A673 (cell line): ENCODE measurements at regions of chr19 and their contacts with region 1.

Region 1: GRCh38 chr19:48333467-48334384 is 8.4 kb downstream of the EMP3 start:
- DNase-seq: peak; percentile 96
- H3K4me3 ChIP-seq: peak overlapping the region; percentile 56
- H3K27ac ChIP-seq: peak overlapping the region; percentile 91
- H3K4me1 ChIP-seq: peaks cover 15% of the 10 kb centered on the region
- H3K27me3 ChIP-seq: no peaks in the 10 kb centered on the region
- CTCF ChIP-seq: peak; percentile 91

Region 2: DNA sequence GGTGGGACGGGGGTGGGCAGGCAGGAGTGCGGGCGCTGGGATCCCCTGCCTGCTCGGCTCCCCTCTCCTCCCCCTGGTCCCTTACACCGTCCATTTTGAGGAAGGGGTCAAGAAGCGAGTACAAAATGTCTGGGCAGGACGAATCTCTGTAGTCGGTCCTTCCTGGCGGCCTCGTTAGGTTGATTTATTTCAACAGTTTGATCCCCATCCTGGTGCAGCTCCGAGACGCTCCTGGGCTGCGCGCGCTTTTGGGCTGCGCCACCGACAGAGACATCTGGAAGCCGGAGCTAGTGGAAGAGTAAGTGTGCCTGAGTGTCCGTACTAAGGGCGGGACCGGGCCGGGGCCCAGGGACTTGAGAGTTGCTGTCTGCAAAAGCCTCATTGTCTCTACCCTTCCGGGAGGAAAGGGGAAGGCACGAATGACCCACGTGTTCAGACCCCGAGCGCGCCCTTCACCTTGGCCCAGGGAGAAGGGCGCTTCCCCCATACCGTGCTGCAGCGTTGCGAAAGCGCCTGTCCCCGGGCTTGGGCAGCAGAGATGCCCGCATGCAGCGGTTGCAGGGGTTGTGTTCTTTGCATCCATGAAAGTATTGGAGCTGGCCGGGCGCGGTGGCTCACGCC is 62.1 kb before region 1 on chr19:
- CTCF ChIA-PET with region 1: interaction called, 4 read pairs
- POLR2A ChIA-PET with region 1: no interaction called
- intact Hi-C with region 1: loop called (anchors 5 kb)
- DNase-seq: peak; percentile 62
- H3K4me3 ChIP-seq: peak overlapping the region; percentile 60
- H3K27ac ChIP-seq: peak overlapping the region; percentile 72
- H3K4me1 ChIP-seq: peaks cover 3% of the 10 kb centered on the region
- H3K27me3 ChIP-seq: no peaks in the 10 kb centered on the region
- CTCF ChIP-seq: no peak

Region 3: GRCh38 chr19:48308631-48309586 is 24.8 kb before region 1 on chr19:
- CTCF ChIA-PET with region 1: interaction called, 13 read pairs
- POLR2A ChIA-PET with region 1: no interaction called
- intact Hi-C with region 1: no loop called
- DNase-seq: no peak
- H3K4me3 ChIP-seq: no peak overlapping the region
- H3K27ac ChIP-seq: no peak overlapping the region
- H3K4me1 ChIP-seq: peaks cover 8% of the 10 kb centered on the region
- H3K27me3 ChIP-seq: no peaks in the 10 kb centered on the region
- CTCF ChIP-seq: 0 out of 2 replicates have a peak, but pooled peaks have one; percentile 19

Region 4: DNA sequence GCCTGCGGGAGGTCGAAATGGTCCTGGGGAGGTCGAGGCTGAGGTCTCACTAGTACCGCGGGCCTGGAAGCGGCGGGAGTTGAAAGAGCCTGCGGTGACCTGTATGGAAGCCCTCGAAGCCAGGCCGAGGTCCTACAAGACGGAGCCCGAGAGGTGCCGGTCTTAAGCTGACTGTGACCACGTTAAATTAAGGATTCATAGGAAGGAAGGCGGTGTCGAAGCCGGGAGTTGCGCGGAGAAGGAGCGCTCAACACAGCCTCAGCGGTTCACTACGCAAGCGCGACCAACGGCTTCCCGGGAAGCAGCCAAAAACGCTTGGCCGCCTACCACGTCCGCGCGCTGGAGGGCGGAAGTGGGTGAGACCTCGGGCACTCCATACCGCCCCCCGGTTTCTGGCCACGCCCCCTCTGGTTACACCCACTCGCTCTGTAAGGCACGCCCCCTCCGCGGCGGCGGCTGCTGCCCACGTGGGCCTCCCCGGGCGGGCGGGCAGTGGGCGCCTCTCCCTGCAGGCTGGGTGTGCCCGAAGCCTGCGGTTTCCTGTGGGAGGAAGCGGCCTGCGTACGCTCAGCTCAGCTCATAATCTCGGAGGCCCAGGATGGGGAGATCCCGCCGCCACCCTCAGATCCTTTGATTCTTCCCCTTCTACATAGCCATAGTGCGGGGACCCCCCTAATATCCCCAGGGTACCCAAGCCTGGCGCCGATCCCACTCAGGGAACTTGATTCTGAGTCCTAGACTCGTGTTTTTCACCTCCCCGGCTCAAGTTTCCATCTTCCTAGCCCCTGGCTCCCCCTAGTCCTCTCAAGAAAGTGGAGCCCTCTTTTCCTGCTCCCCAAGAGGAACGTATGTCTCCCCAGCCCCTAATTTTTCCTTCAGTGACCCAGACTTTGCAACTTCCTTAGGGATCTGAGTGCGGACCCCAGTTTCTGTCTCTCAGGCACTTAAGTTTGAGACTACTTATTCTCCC is 11.8 kb before region 1 on chr19:
- CTCF ChIA-PET with region 1: interaction called, 29 read pairs
- POLR2A ChIA-PET with region 1: no interaction called
- intact Hi-C with region 1: loop called (anchors 1 kb)
- DNase-seq: peak; percentile 99
- H3K4me3 ChIP-seq: peak overlapping the region; percentile 57
- H3K27ac ChIP-seq: peak overlapping the region; percentile 97
- H3K4me1 ChIP-seq: peaks cover 51% of the 10 kb centered on the region
- H3K27me3 ChIP-seq: no peaks in the 10 kb centered on the region
- CTCF ChIP-seq: no peak

Region 5: GRCh38 chr19:48372904-48373303 is 39.2 kb after region 1 on chr19:
- CTCF ChIA-PET with region 1: no interaction called
- POLR2A ChIA-PET with region 1: no interaction called
- intact Hi-C with region 1: no loop called
- DNase-seq: peak; percentile 78
- H3K4me3 ChIP-seq: no peak overlapping the region
- H3K27ac ChIP-seq: peak overlapping the region; percentile 0
- H3K4me1 ChIP-seq: peaks cover 12% of the 10 kb centered on the region
- H3K27me3 ChIP-seq: no peaks in the 10 kb centered on the region
- CTCF ChIP-seq: no peak